RWPE1 (cell line): ENCODE measurements at regions of chr1 and their contacts with region 1.

Region 1: DNA sequence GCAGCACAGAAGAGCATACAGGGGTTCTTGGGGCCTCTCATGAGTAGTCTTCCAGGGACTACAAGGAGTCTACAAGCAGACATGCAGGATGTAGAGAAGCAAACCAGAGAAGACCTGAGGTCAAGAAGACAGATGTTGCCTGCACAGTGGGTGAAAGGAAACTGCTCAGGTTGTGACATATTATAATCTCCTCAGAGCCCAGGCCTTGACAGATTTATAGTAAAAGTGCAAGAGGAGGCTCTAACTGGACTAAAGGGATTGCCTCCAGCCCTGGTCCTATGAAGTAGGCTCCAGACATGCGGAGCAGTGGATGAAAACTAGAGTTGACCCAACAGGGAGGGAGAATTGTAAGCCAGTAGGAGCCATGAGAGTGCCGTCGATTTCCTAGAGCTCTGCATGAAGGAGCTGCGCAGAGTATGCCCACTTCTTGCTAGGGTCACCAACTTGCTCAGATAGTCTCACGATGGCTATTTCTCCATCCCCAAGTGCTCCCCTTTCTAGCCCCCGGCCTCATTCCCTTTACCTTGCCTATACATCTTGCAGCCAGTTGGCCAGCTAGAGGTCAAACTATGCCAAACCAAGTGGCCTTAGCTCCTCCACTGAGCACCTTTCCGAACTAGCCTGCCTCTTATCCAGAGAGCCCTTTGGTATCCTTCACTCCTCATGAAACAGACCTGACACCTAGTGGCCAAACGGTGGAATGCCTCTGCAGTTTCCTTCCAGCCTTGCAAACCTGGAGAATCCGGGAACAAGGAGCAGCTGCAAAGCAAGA is 36.2 kb upstream of the IPO9 start:
- DNase-seq: peak; percentile 88
- H3K27ac ChIP-seq: peak overlapping the region; percentile 75
- CTCF ChIP-seq: peak; percentile 96

Region 2: GRCh38 chr1:200837931-200838571 is 954.7 kb before region 1 on chr1:
- CTCF ChIA-PET with region 1: no interaction called
- POLR2A ChIA-PET with region 1: no interaction called
- DNase-seq: peak; percentile 16
- H3K27ac ChIP-seq: no peak overlapping the region
- CTCF ChIP-seq: peak; percentile 63

Region 3: DNA sequence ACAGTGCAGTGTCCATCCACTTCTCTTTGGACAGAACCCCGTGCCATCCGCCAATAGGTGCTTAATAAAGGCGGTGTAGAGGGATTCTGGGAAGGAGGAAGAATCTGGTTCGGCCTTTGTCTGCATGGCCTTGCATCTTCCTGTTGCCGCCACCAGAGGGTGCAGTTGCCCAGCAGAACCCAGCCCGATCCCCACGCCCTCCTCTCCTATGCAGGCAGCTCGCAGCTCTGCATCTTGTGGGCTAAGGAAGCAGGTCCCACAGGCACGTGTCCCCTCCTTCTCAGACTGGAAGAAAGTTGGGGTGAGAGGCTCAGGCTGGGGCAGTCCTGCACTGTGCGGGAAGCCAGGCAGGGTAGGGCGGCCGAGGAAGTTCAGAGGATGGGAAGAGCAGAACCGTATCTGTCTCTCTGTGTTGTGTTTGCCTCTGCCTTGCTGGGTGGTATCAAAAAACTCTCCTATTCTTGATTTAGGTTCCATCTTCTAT is 233.0 kb before region 1 on chr1:
- CTCF ChIA-PET with region 1: interaction called, 119 read pairs
- POLR2A ChIA-PET with region 1: no interaction called
- DNase-seq: peak; percentile 96
- H3K27ac ChIP-seq: peak overlapping the region; percentile 55; the same call in 1 of the 2 replicates
- CTCF ChIP-seq: peak; percentile 88

Region 4: DNA sequence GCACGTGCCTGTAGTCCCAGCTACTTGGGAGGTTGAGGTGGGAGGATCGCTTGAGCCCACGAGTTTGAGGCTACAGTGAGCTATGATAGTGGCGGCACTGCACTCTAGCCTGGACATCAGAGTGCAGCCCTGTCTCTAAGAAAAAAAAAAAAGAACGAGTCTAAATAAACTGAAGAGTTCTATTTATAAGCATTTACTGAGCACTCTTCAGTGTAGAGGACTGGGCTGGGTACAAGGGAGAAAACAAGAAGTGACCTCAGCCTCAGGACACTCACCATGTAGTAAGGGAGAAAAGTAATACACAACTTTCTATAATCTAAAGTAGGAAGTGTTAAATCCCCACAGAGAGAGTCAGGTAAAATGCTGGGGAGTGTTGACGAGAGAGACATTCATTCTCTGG is 218.8 kb before region 1 on chr1:
- CTCF ChIA-PET with region 1: interaction called, 10 read pairs
- POLR2A ChIA-PET with region 1: no interaction called
- DNase-seq: no peak
- H3K27ac ChIP-seq: no peak overlapping the region
- CTCF ChIP-seq: no peak

Region 5: GRCh38 chr1:201681375-201681774 is 111.3 kb before region 1 on chr1:
- CTCF ChIA-PET with region 1: interaction called, 12 read pairs
- POLR2A ChIA-PET with region 1: no interaction called
- DNase-seq: no peak
- H3K27ac ChIP-seq: no peak overlapping the region
- CTCF ChIP-seq: no peak

Region 6: GRCh38 chr1:201709564-201710295 is 83.0 kb before region 1 on chr1:
- CTCF ChIA-PET with region 1: interaction called, 351 read pairs
- POLR2A ChIA-PET with region 1: no interaction called
- DNase-seq: peak; percentile 79
- H3K27ac ChIP-seq: peak overlapping the region; percentile 96
- CTCF ChIP-seq: peak; percentile 83

Region 7: GRCh38 chr1:201739492-201740085 is 53.1 kb before region 1 on chr1:
- CTCF ChIA-PET with region 1: interaction called, 12 read pairs
- POLR2A ChIA-PET with region 1: no interaction called
- DNase-seq: peak; percentile 79
- H3K27ac ChIP-seq: peak overlapping the region; percentile 76
- CTCF ChIP-seq: no peak

Region 8: GRCh38 chr1:201807958-201808632 is 15.4 kb after region 1 on chr1:
- CTCF ChIA-PET with region 1: interaction called, 26 read pairs
- POLR2A ChIA-PET with region 1: no interaction called
- DNase-seq: no peak
- H3K27ac ChIP-seq: no peak overlapping the region
- CTCF ChIP-seq: no peak

Region 9: DNA sequence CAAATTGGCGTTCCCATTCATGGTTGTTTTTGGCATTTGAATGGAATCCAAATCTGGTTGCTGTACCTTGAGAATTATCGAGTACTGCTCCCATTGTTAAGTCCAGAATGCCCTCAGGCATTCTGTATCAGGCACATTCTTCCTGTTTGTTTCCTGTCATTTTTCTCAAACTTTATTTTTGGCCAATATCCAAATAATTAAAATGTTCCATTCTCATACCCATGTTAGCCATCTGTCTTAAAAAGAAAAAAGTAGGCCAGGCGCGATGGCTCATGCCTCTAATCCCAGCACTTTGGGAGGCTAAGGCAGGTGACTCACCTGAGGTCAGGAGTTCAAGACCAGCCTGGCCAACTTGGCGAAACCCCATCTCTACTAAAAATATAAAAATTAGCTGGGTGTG is 66.7 kb after region 1 on chr1:
- CTCF ChIA-PET with region 1: no interaction called
- POLR2A ChIA-PET with region 1: no interaction called
- DNase-seq: no peak
- H3K27ac ChIP-seq: no peak overlapping the region
- CTCF ChIP-seq: no peak

Region 10: DNA sequence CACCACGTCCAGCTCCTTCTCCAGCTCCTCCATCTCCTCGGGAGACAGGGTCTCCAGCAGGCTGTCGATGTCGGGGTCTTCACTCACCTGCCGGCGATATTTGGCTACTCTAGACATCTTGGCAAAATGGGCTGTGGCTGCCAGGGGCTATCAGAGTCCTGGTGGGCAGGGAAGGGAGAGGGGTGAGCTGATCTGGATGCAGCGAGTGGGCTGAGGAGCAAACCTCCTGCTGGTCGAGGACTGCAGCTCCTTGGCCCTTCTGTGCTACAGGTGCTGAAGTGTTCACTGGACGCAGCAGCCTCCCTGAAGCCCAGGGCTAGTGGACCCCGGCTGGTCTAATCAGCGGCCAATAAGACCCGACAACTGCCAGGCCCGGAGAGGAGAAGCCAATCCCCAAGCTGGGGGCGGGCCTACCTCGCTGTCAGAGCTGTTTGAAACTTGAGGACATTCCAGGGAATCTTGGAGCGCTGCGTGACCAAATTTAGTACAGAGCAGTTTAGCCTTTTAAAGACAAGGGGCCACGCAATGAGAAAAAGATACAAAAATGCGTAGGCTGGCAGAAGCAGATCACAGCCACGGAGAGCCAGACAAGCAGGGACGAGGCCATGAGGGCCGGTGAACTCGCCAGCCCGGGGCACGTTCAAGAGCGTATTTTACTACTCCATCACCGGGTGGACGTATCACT is 153.6 kb after region 1 on chr1 and contains the start of gene LMOD1:
- CTCF ChIA-PET with region 1: no interaction called
- POLR2A ChIA-PET with region 1: no interaction called
- DNase-seq: no peak
- H3K27ac ChIP-seq: no peak within 1 kb of the TSS
- CTCF ChIP-seq: no peak